Heart left ventricle (tissue), 16 donors: ENCODE measurements at regions of chr1 and their contacts with region 1.

Region 1: GRCh38 chr1:31548907-31549808 is 27.2 kb upstream of the TINAGL1 start:
- DNase-seq: peak; percentile 67 to 80 (median 78)
- ATAC-seq: peak; percentile 85 to 93 (median 91)
- H3K4me3 ChIP-seq: peak overlapping the region in 8 of 12 donors; percentile 7 to 46 (median 34)
- H3K27ac ChIP-seq: peak overlapping the region in 10 of 12 donors; percentile 13 to 67 (median 53)
- H3K4me1 ChIP-seq: peaks cover 0 to 18% (median 8%) of the 10 kb centered on the region in 12 donors
- H3K27me3 ChIP-seq: peaks cover 0 to 5% (median 0%) of the 10 kb centered on the region in 9 donors
- CTCF ChIP-seq: peak; percentile 91 to 97 (median 94)
- POLR2A ChIP-seq: no peak

Region 2: DNA sequence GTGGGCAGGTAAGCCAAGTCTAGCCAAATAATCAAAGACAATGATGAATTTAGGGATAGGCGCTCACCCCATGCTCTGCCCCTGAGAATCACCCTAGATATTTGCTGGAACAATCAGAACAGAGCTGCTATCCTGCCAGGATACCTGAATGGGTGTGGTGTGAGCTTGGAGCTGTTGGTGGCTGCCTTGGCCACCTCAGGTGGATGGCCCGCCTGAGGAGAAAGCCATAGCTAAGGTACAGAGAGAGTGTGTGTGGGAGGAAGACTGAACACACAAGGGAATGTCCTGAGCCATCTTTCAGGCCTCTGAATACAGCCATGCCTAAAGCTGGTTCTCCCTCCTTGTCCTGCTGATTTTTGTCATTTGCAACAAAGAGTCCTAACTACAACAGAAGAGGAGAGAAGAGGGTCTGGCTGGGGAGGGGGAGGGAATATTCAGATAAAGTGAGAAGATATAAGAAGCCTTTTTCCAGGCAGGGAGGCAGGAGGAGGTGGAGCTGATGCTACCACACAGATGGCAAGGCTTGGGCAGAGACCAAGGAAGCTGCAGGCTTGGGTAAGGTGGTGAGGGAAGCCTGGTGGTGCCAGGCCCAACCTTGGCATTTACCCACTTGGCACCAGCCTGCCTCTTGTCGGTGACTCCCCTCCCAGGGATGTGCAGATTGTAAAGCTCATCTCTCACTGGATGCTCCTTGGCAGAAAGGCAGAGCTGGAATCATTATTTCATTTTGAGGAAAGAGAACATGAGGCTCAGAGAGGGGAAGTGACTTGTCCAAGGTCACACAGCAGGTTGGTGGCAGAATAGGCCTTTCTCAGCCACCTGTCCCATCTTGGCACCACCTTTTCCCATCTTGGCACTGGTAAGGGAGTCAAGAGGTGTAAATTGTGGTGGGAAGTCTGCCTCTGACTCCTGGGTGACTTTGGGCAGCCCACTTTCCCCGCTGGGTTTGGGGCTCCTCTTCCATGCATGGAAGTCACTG is 359.2 kb before region 1 on chr1:
- intact Hi-C with region 1: loop called in 5 of 10 experiments (anchors 2 to 10 kb)
- DNase-seq: no peak
- ATAC-seq: no peak
- H3K4me3 ChIP-seq: no peak overlapping the region
- H3K27ac ChIP-seq: no peak overlapping the region
- H3K4me1 ChIP-seq: no peaks in the 10 kb centered on the region
- H3K27me3 ChIP-seq: peaks cover 0 to 15% (median 0%) of the 10 kb centered on the region in 9 donors
- CTCF ChIP-seq: no peak
- POLR2A ChIP-seq: no peak

Region 3: GRCh38 chr1:31394628-31395193 is 154.4 kb before region 1 on chr1:
- intact Hi-C with region 1: loop called in 8 of 10 experiments (anchors 1 to 10 kb)
- DNase-seq: peak; percentile 76 to 90 (median 83)
- ATAC-seq: peak; percentile 87 to 97 (median 96)
- H3K4me3 ChIP-seq: peak overlapping the region; percentile 11 to 58 (median 36)
- H3K27ac ChIP-seq: peak overlapping the region in 9 of 12 donors; percentile 6 to 67 (median 49)
- H3K4me1 ChIP-seq: peaks cover 0 to 12% (median 5%) of the 10 kb centered on the region in 12 donors
- H3K27me3 ChIP-seq: peaks cover 0 to 3% (median 0%) of the 10 kb centered on the region in 9 donors
- CTCF ChIP-seq: peak; percentile 79 to 94 (median 91)
- POLR2A ChIP-seq: no peak

Region 4: GRCh38 chr1:31460027-31460426 is 89.1 kb before region 1 on chr1:
- intact Hi-C with region 1: loop called in 5 of 10 experiments (anchors 2 to 5 kb)
- DNase-seq: no peak
- ATAC-seq: no peak
- H3K4me3 ChIP-seq: no peak overlapping the region
- H3K27ac ChIP-seq: no peak overlapping the region
- H3K4me1 ChIP-seq: no peaks in the 10 kb centered on the region
- H3K27me3 ChIP-seq: peaks cover 0 to 6% (median 0%) of the 10 kb centered on the region in 9 donors
- CTCF ChIP-seq: peak in 4 of 12 donors; percentile 8 to 31 (median 26)
- POLR2A ChIP-seq: no peak